K562 (cell line): ENCODE measurements at regions of chr1 and their contacts with region 1.

Region 1: DNA sequence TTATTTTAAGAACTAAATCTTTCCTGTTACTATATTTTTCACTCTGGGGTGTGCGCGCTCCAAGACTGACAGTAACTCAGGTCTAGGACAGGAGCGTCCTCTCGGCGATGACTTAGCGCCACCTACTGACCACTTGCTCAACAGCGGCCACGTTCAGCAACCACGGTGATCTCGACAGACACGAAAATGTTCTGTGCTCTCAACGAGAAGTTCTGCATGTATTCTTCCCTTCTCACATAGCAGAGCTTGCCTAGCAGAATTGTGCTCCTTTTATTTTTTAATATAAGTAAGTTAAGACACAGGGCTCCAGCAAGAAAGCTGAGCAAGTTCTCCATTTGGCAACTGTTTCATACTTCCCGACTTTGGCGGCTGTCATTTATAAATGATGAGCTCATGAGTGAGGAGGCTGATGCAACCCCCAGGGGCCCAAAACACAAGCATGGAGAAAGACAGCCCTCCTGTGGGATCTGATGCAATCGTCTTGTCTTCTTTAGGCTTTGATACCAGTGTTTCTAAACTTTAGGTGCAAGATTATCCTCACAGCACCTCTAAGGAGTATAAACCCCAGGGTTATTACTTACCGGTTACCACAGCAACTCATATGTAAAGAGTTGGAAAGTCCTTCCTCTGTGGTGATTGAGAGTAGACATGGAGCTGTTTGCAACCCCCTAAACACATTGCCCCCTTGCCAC is 92.6 kb downstream of the HHIPL2 start:
- DNase-seq: peak; percentile 86 to 91 (median 86)
- ATAC-seq: peak; percentile 98
- H3K4me3 ChIP-seq: no peak overlapping the region
- H3K27ac ChIP-seq: peak overlapping the region; percentile 21; the same call in 1 of the 3 replicates
- H3K4me1 ChIP-seq: peaks cover 0 to 6% of the 10 kb centered on the region in 2 experiments; a peak in 3 of 5 replicates
- H3K27me3 ChIP-seq: peaks cover 0 to 6% of the 10 kb centered on the region in 2 experiments; a peak in 1 of 5 replicates
- CTCF ChIP-seq: peak; percentile 93 to 98 (median 96)
- EP300 ChIP-seq: peak; percentile 84
- POLR2A ChIP-seq: no peak
- RAD21 ChIP-seq: peak; percentile 95 to 99

Region 2: GRCh38 chr1:220810179-220810653 is 1645.1 kb before region 1 on chr1:
- CTCF ChIA-PET with region 1: no interaction called
- POLR2A ChIA-PET with region 1: no interaction called
- in situ Hi-C with region 1: loop called (anchors 10 kb)
- intact Hi-C with region 1: loop called (anchors 2 kb)
- DNase-seq: peak; percentile 74 to 86 (median 82)
- ATAC-seq: peak; percentile 93
- H3K4me3 ChIP-seq: no peak overlapping the region
- H3K27ac ChIP-seq: no peak overlapping the region
- H3K4me1 ChIP-seq: peaks cover 2 to 4% of the 10 kb centered on the region in 2 experiments; a peak in 3 of 5 replicates
- H3K27me3 ChIP-seq: peaks cover 2 to 20% of the 10 kb centered on the region in 2 experiments; a peak in 3 of 5 replicates
- CTCF ChIP-seq: peak; percentile 91 to 95 (median 92)
- EP300 ChIP-seq: no peak
- POLR2A ChIP-seq: no peak
- RAD21 ChIP-seq: peak; percentile 69 to 80

Region 3: DNA sequence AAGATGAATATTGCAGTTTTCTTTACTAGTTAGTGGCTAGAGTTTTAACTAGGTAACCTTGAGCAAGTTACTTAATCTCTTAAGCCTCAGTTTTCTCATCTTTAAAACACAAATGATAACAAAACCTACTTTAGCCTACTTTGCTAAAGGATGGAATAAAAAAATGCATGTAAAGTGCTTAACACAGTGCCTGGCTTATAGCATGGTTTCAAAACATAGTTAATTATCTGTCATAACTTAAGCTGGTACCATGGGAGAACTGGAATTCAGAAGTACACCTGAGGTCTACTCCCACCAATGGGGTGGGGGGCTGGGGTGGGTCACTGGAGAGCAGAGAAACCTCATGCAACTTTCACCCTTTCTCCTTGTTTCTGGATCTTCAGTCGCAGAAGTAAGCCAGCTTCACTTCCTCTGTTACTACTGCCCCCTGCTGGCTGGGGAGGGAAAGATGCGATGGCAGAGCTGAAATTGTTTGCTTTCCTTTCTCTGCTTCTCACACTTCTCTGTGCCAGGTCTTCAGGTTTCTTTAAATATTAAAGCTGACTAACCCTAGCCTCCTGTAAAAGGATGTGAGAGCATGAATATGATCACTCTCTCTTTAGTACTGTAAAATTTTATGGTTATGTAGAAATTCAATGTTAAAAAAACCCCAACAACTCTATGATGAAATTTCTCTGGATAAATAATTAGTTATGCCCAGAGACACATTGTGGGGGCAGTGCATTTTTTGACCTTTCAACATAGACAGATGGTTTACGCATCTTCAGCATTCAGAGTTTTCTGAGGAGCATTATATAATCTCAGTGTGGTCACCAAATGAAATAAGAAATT is 1251.9 kb before region 1 on chr1:
- CTCF ChIA-PET with region 1: no interaction called
- POLR2A ChIA-PET with region 1: no interaction called
- in situ Hi-C with region 1: no loop called
- intact Hi-C with region 1: loop called (anchors 5 kb)
- DNase-seq: peak; percentile 63 to 76 (median 71)
- ATAC-seq: peak; percentile 72
- H3K4me3 ChIP-seq: no peak overlapping the region
- H3K27ac ChIP-seq: no peak overlapping the region
- H3K4me1 ChIP-seq: no peaks in the 10 kb centered on the region
- H3K27me3 ChIP-seq: no peaks in the 10 kb centered on the region
- CTCF ChIP-seq: peak; percentile 66 to 79 (median 73)
- EP300 ChIP-seq: no peak
- POLR2A ChIP-seq: no peak
- RAD21 ChIP-seq: peak; percentile 74 to 82

Region 4: DNA sequence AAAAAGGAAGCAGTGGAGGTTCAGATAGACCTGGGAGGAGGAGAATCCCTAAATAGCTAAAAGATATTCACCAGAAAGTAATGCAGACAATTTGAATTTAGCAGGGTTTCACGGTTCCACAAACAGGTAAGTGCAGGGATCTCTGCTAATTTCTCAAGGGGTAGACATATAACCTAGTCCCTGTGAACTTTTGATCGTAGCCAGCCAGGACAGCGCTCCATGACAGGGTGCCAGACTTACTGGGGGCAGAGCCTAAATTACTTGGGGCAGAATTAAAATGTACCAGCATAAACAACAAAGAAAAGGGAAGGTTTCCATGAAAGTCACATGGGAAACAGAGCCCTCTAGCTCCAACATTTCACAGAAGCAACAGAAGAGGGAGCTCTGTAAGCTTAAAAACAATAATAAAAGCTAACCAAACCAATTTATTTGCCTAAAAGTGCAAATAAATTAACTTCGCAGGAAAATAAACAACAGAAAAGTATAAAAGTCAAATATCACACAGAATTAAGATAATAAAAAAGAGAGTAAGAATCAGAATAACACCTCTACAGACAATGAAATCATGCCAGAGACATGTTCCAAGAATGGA is 911.7 kb before region 1 on chr1:
- CTCF ChIA-PET with region 1: no interaction called
- POLR2A ChIA-PET with region 1: no interaction called
- in situ Hi-C with region 1: no loop called
- intact Hi-C with region 1: loop called (anchors 2 kb)
- DNase-seq: peak in 2 of 4 experiments; percentile 8 to 24
- ATAC-seq: peak; percentile 57; the same call in 2 of the 3 replicates
- H3K4me3 ChIP-seq: no peak overlapping the region
- H3K27ac ChIP-seq: no peak overlapping the region
- H3K4me1 ChIP-seq: no peaks in the 10 kb centered on the region
- H3K27me3 ChIP-seq: no peaks in the 10 kb centered on the region
- CTCF ChIP-seq: peak in 2 of 3 experiments; percentile 44 to 66; a peak in 2 of 6 replicates
- EP300 ChIP-seq: no peak
- POLR2A ChIP-seq: no peak
- RAD21 ChIP-seq: peak; percentile 85 to 90

Region 5: DNA sequence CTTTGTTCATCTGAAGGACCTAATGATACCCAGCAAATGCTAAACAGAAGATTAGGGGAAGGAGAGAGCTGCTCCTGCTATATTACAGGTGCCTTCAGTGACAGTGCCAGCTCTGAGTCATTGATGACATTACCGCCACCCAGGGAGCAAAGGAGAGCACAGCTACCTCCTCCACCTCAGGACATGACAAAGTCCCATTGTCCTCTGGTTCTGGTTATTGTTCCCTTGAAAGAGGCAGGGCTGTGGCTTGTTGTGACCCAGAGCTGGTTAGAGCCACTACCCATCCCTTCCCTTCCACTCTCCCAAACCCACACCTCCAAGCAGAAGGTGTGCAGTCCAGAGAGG is 350.0 kb before region 1 on chr1:
- CTCF ChIA-PET with region 1: no interaction called
- POLR2A ChIA-PET with region 1: no interaction called
- in situ Hi-C with region 1: loop called (anchors 10 kb)
- intact Hi-C with region 1: no loop called
- DNase-seq: no peak
- ATAC-seq: 0 out of 3 replicates have a peak, but pooled peaks have one; percentile 32
- H3K4me3 ChIP-seq: no peak overlapping the region
- H3K27ac ChIP-seq: no peak overlapping the region
- H3K4me1 ChIP-seq: no peaks in the 10 kb centered on the region
- H3K27me3 ChIP-seq: no peaks in the 10 kb centered on the region; a peak in 1 of 5 replicates
- CTCF ChIP-seq: no peak
- EP300 ChIP-seq: no peak
- POLR2A ChIP-seq: no peak
- RAD21 ChIP-seq: no peak

Region 6: DNA sequence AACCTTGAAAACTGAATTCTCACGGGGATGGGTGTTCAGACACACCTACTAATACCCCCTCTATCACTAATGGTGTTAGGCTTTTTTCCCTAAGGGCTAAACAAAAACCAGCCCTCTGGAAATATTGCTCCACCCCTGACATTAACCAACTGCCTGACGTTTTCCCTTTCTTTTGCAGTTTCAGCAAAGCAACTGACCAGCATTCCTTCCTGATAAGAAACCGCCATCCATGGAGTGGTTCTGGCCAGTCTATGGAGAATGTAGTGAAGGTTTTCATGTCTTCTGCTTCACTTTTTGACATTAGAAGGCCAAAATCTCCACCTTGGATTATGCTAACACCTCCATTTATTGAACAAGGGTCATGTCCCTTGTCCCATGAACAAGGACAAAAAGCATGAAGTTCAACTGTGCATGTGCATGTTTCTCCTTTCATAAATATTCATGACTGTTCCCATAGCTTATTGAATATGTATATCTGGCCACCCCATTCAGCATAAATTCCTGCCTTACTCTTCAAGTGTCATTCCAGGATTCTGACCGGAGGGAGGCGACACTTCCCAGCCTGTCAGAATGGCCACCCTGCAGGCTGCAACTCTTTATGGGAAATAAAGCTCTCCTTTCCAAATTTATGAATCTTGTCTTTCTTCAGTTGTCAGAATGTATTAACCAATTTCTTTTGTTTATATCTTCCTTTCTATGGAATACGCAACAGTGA is 221.7 kb before region 1 on chr1:
- CTCF ChIA-PET with region 1: no interaction called
- POLR2A ChIA-PET with region 1: no interaction called
- in situ Hi-C with region 1: no loop called
- intact Hi-C with region 1: loop called (anchors 2 kb)
- DNase-seq: peak in 1 of 4 experiments; percentile 25
- ATAC-seq: peak; percentile 78
- H3K4me3 ChIP-seq: no peak overlapping the region
- H3K27ac ChIP-seq: no peak overlapping the region
- H3K4me1 ChIP-seq: no peaks in the 10 kb centered on the region
- H3K27me3 ChIP-seq: no peaks in the 10 kb centered on the region
- CTCF ChIP-seq: peak; percentile 35 to 53 (median 46); a peak in 4 of 6 replicates
- EP300 ChIP-seq: no peak
- POLR2A ChIP-seq: no peak
- RAD21 ChIP-seq: peak; percentile 79 to 84